ENCODE measurements at regions of chr5 and their contacts with region 1.

Region 1: DNA sequence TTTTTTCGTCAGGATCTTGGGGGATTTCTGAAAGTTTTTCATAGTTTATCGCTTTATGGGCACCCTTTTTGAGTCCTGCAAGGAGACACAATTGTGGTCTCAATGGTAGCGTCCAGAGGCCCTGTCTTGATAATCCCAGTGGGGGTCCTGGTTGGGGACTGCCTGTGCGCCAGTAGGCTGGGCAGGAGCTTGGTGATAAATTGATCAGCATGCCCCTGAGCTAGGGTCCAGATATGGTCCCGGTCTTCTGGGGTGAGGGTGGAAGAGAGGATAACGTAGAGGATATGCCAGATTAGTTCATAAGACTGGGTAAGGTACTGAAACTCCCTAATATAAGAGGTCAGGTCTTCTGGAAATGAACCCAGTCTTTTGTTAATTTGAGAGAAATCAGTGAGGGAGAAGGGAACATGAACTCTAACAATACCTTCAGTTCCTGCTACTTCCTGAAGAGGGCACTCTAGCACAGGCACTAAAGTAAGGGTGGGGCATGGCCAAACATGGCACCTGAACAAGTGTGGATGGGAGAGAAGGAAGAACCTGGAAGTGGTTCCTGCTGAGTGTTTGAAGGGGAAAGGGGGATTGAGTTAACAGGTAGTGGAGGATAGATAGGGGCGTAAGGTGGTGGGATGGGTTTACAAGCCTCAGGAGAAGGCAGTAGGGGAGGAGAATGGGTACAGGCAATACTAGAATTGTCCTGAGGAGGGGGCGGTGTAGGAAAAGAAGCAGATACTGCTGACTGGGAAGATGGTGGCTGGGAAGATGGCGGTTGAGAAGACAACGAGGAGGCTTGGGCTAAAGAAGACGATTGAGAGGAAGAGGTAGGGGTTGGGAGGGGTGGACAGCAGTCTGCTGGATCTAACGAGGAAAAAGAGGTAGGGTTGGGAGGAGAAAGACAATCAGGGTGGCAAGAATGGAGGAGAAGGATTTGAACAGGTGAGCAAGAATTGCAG is 33.8 kb upstream of the ANXA2R start:
- DNase-seq: peak; percentile 64 to 73 (median 67)
- H3K4me3 ChIP-seq: no peak overlapping the region
- H3K4me3 Mint-ChIP-seq: peak overlapping the region in 1 of 8 donors; percentile 17
- H3K27ac ChIP-seq: no peak overlapping the region
- H3K27ac Mint-ChIP-seq: peak overlapping the region; percentile 5 to 71 (median 59)
- H3K4me1 ChIP-seq: peaks cover 46% of the 10 kb centered on the region
- H3K4me1 Mint-ChIP-seq: peaks cover 29 to 72% (median 42%) of the 10 kb centered on the region in 4 donors
- H3K27me3 ChIP-seq: no peaks in the 10 kb centered on the region
- H3K27me3 Mint-ChIP-seq: no peaks in the 10 kb centered on the region

Region 2: GRCh38 chr5:43305948-43306565 is 232.2 kb after region 1 on chr5:
- CTCF ChIA-PET with region 1: interaction called, 4 read pairs
- POLR2A ChIA-PET with region 1: no interaction called
- intact Hi-C with region 1: loop called (anchors 1 kb)
- DNase-seq: peak; percentile 37 to 52 (median 46)
- H3K4me3 ChIP-seq: no peak overlapping the region
- H3K4me3 Mint-ChIP-seq: no peak overlapping the region
- H3K27ac ChIP-seq: no peak overlapping the region
- H3K27ac Mint-ChIP-seq: peak overlapping the region in 4 of 7 donors; percentile 15 to 78 (median 46)
- H3K4me1 ChIP-seq: peaks cover 7% of the 10 kb centered on the region
- H3K4me1 Mint-ChIP-seq: peaks cover 21 to 48% (median 33%) of the 10 kb centered on the region in 4 donors
- H3K27me3 ChIP-seq: no peaks in the 10 kb centered on the region
- H3K27me3 Mint-ChIP-seq: no peaks in the 10 kb centered on the region

Region 3: DNA sequence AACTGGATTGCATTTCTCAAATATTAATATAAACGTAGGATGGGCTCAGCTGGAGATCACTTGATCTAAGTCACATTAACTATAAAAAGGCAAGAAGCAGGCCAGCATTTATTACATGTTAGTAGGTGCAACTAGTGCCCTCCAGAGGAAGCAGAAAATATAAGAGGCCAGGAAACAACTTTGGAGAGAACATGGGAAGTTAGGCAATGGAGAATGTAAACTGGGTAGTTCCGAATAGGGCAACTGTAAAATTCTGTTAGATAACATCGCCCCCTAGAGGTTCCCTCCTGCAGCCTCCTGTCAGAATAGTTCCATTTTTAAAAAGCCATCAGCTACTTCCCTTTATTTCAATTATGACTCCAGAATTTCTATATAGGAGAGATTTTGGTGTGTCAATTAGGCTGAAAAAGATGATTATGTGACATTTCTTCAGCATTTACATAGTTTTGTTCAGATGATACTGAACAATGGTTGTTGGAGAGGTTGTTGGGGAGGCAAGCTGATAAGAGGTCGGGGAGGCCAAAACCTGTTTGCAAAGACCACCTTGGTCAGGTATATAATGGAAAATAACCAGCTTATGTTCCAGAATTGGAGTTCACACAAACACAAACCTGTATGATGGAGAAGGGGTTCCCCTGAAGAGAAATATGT is 315.9 kb after region 1 on chr5:
- CTCF ChIA-PET with region 1: no interaction called
- POLR2A ChIA-PET with region 1: no interaction called
- intact Hi-C with region 1: loop called (anchors 1 kb)
- DNase-seq: peak; percentile 45 to 56 (median 53)
- H3K4me3 ChIP-seq: no peak overlapping the region
- H3K4me3 Mint-ChIP-seq: no peak overlapping the region
- H3K27ac ChIP-seq: no peak overlapping the region
- H3K27ac Mint-ChIP-seq: peak overlapping the region in 3 of 7 donors; percentile 0 to 47 (median 31)
- H3K4me1 ChIP-seq: peaks cover 11% of the 10 kb centered on the region
- H3K4me1 Mint-ChIP-seq: peaks cover 6 to 30% (median 21%) of the 10 kb centered on the region in 4 donors
- H3K27me3 ChIP-seq: no peaks in the 10 kb centered on the region
- H3K27me3 Mint-ChIP-seq: no peaks in the 10 kb centered on the region

Region 4: DNA sequence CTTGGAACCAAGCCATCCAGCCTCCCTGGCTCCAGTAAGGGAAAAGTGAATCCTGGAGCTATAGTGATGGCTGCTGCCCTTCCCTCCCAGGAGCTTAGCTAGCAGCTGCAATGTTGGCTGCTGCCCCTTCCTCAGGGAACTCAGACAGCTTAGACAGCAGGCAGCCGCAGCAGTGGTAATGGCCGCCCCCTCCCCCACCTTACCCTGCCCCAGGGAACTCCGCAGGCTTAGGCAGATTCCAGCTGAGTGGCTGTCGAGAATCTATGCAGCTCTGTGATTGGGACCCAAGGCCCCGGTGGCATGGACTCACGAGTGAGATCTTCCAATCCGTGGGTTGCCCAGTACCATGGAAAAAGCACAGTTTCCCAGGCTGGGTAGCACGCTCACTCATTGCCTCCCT is 907.7 kb after region 1 on chr5:
- CTCF ChIA-PET with region 1: no interaction called
- POLR2A ChIA-PET with region 1: no interaction called
- intact Hi-C with region 1: no loop called
- DNase-seq: no peak
- H3K4me3 ChIP-seq: no peak overlapping the region
- H3K4me3 Mint-ChIP-seq: no peak overlapping the region
- H3K27ac ChIP-seq: no peak overlapping the region
- H3K27ac Mint-ChIP-seq: no peak overlapping the region
- H3K4me1 ChIP-seq: no peaks in the 10 kb centered on the region
- H3K4me1 Mint-ChIP-seq: no peaks in the 10 kb centered on the region
- H3K27me3 ChIP-seq: no peaks in the 10 kb centered on the region
- H3K27me3 Mint-ChIP-seq: no peaks in the 10 kb centered on the region

Measured in CD4-positive, alpha-beta memory T cell (primary cell).